CD8-positive, alpha-beta T cell (primary cell): ENCODE measurements at regions of chr10 and their contacts with region 1.

Region 1: DNA sequence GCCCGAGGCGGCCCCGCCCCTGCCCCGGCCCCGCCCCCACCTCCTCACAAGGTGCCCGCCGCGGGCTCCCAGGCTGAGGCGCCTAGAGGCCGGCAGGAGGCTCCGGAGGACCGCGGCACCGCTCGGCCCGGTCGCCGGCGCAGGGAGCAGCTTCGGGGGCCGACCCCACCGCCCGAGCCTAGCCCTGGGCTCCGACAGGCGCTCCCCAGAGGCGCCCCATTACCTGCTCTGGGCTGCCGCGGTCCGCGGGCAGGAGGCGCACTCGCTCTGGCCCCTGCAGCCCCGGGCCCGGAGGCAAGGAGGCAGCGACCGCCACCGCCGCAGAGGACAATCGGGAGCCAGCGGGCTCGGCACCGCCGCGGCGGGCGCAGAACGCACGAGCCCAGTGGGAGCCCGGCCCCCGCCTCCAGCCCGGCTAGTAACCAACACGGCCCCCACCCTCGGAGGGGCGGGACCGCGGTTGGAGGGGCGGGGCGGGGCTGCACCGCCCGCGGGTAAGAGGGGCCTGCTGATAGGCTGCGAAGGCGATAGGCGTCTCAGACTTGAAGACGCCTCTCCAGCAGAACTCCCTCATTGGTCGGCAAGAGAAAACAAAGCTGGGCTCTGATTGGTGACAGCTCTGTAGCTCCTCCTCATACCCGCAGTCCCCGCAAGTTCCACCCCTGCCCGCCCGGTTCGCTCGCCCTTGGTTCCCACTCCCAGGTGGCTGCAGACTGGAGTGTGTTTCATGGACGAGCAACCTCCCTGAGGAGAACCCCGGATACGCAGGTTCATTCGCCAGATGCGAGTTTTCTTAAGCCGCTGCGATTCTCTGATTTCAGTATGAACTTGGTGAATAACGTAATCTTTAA is at the start of gene MPP7:
- DNase-seq: peak; percentile 94 to 98 (median 96)
- ATAC-seq: peak; percentile 89
- H3K4me3 ChIP-seq: peak within 1 kb of the TSS; percentile 67 to 87
- H3K4me3 Mint-ChIP-seq: peak within 1 kb of the TSS; percentile 97
- H3K27ac ChIP-seq: peak within 1 kb of the TSS; percentile 52 to 71
- H3K27ac Mint-ChIP-seq: peak within 1 kb of the TSS; percentile 95
- H3K4me1 ChIP-seq: peaks cover 44% of the 10 kb centered on the region
- H3K4me1 Mint-ChIP-seq: peaks cover 65% of the 10 kb centered on the region
- H3K27me3 ChIP-seq: no peaks in the 10 kb centered on the region
- H3K27me3 Mint-ChIP-seq: no peaks in the 10 kb centered on the region
- CTCF ChIP-seq: peak; percentile 61
- total RNA-seq, gene MPP7: 22.5 to 23.1 TPM

Region 2: GRCh38 chr10:27504007-27504807 is 798.7 kb before region 1 on chr10 and contains the start of gene RAB18:
- CTCF ChIA-PET with region 1: no interaction called
- POLR2A ChIA-PET with region 1: interaction called, 3 read pairs
- intact Hi-C with region 1: loop called in 1 of 2 experiments (anchors 10 kb)
- DNase-seq: peak; percentile 94 to 99 (median 98)
- ATAC-seq: peak; percentile 95
- H3K4me3 ChIP-seq: peak within 1 kb of the TSS; percentile 73 to 82
- H3K4me3 Mint-ChIP-seq: peak within 1 kb of the TSS; percentile 99
- H3K27ac ChIP-seq: peak within 1 kb of the TSS; percentile 81 to 90
- H3K27ac Mint-ChIP-seq: peak within 1 kb of the TSS; percentile 98
- H3K4me1 ChIP-seq: peaks cover 33% of the 10 kb centered on the region
- H3K4me1 Mint-ChIP-seq: peaks cover 52% of the 10 kb centered on the region
- H3K27me3 ChIP-seq: no peaks in the 10 kb centered on the region
- H3K27me3 Mint-ChIP-seq: no peaks in the 10 kb centered on the region
- CTCF ChIP-seq: no peak
- total RNA-seq, gene RAB18: 130 to 146 TPM

Region 3: GRCh38 chr10:27794157-27794556 is 508.7 kb before region 1 on chr10:
- CTCF ChIA-PET with region 1: no interaction called
- POLR2A ChIA-PET with region 1: no interaction called
- intact Hi-C with region 1: no loop called
- DNase-seq: peak in 1 of 9 experiments; percentile 5
- ATAC-seq: no peak
- H3K4me3 ChIP-seq: no peak overlapping the region
- H3K4me3 Mint-ChIP-seq: no peak overlapping the region
- H3K27ac ChIP-seq: no peak overlapping the region
- H3K27ac Mint-ChIP-seq: no peak overlapping the region
- H3K4me1 ChIP-seq: no peaks in the 10 kb centered on the region
- H3K4me1 Mint-ChIP-seq: no peaks in the 10 kb centered on the region
- H3K27me3 ChIP-seq: no peaks in the 10 kb centered on the region
- H3K27me3 Mint-ChIP-seq: peaks cover 13% of the 10 kb centered on the region
- CTCF ChIP-seq: no peak

Region 4: DNA sequence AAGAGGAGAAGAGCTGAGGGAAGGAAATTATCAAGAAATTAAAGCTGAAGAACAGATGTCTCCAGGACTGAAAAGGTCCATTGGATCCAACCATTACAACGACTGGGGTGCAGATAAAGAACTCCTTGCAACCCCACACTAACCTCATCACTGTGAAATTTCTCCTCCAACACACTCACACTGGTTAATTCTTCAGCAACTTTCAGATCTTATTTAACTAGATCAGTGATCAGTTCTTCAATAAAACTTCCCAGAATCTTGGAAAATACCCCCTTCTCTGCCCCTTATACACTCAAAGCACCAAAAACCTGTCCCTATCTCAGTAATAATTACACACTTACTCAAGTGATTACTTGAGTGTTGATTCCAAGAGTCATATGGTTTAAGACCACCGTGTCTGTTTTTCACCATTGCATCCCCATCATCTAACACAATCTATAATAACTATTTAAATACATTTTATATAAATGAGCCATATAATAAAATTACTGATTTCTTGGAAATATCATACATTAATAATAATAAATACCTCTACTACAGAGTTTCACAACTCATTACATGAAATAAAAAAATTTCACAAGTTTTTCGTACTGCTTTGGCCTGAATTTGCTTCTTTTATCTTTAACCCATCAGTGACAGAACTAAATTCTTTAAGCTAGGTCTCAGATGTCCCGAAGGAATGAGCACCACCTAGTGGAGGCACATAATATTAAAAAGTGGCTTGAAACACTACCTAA is 123.7 kb before region 1 on chr10:
- CTCF ChIA-PET with region 1: no interaction called
- POLR2A ChIA-PET with region 1: no interaction called
- intact Hi-C with region 1: loop called in 1 of 2 experiments (anchors 2 kb)
- DNase-seq: peak in 3 of 9 experiments; percentile 32 to 77 (median 68)
- ATAC-seq: peak; percentile 54
- H3K4me3 ChIP-seq: peak overlapping the region; percentile 22 to 45
- H3K4me3 Mint-ChIP-seq: peak overlapping the region; percentile 91
- H3K27ac ChIP-seq: peak overlapping the region in 1 of 2 experiments; percentile 69
- H3K27ac Mint-ChIP-seq: peak overlapping the region; percentile 95
- H3K4me1 ChIP-seq: peaks cover 16% of the 10 kb centered on the region
- H3K4me1 Mint-ChIP-seq: peaks cover 44% of the 10 kb centered on the region
- H3K27me3 ChIP-seq: no peaks in the 10 kb centered on the region
- H3K27me3 Mint-ChIP-seq: no peaks in the 10 kb centered on the region
- CTCF ChIP-seq: peak; percentile 93

Region 5: DNA sequence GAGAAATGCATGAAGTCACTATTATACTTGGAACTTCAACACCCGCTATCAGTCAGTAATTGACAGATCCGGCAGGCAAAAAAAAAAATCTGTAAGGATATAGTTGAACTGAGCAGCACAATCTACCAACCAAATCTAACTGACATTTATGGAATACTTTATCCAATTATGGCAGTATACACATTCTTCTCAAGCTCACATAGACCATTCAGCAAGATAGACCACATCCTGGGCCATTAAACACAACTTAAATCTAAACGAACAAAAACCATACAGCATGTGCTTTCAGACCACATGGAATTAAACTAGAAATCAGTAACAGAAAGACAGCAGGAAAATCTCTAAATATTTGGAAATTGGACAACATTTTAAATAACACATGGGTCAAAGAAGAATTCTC is 112.7 kb before region 1 on chr10:
- CTCF ChIA-PET with region 1: no interaction called
- POLR2A ChIA-PET with region 1: no interaction called
- intact Hi-C with region 1: no loop called
- DNase-seq: no peak
- ATAC-seq: no peak
- H3K4me3 ChIP-seq: no peak overlapping the region
- H3K4me3 Mint-ChIP-seq: no peak overlapping the region
- H3K27ac ChIP-seq: no peak overlapping the region
- H3K27ac Mint-ChIP-seq: no peak overlapping the region
- H3K4me1 ChIP-seq: no peaks in the 10 kb centered on the region
- H3K4me1 Mint-ChIP-seq: peaks cover 37% of the 10 kb centered on the region
- H3K27me3 ChIP-seq: no peaks in the 10 kb centered on the region
- H3K27me3 Mint-ChIP-seq: no peaks in the 10 kb centered on the region
- CTCF ChIP-seq: no peak

Region 6: GRCh38 chr10:28250782-28251181 is 52.1 kb before region 1 on chr10:
- CTCF ChIA-PET with region 1: interaction called, 8 read pairs
- POLR2A ChIA-PET with region 1: interaction called, 5 read pairs
- intact Hi-C with region 1: loop called (anchors 2 to 5 kb)
- DNase-seq: peak in 2 of 9 experiments; percentile 33 to 50
- ATAC-seq: peak; percentile 42
- H3K4me3 ChIP-seq: no peak overlapping the region
- H3K4me3 Mint-ChIP-seq: no peak overlapping the region
- H3K27ac ChIP-seq: no peak overlapping the region
- H3K27ac Mint-ChIP-seq: no peak overlapping the region
- H3K4me1 ChIP-seq: no peaks in the 10 kb centered on the region
- H3K4me1 Mint-ChIP-seq: peaks cover 41% of the 10 kb centered on the region
- H3K27me3 ChIP-seq: no peaks in the 10 kb centered on the region
- H3K27me3 Mint-ChIP-seq: no peaks in the 10 kb centered on the region
- CTCF ChIP-seq: peak; percentile 60

Region 7: DNA sequence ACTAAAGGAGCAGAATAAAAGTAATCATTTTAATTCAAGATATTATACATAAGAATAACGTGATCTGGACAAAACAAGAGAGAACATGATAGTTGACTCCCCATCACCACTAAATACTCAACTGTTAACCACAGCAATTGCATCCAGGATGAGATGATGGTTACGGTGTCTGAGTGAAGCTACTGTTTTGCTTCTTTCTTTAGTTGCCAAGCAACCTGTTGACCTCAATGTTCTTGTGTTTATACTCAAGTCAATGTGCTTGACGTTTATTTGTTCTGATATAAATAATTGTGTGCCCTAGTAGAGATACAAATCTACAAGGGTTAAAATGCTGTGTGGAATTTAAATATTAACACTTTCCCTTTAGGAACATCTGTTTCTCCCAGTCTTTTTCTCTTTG is 31.4 kb after region 1 on chr10:
- CTCF ChIA-PET with region 1: interaction called, 36 read pairs
- POLR2A ChIA-PET with region 1: interaction called, 39 read pairs
- intact Hi-C with region 1: loop called (anchors 1 kb)
- DNase-seq: peak in 8 of 9 experiments; percentile 14 to 98 (median 50)
- ATAC-seq: peak; percentile 61
- H3K4me3 ChIP-seq: peak overlapping the region; percentile 60 to 67
- H3K4me3 Mint-ChIP-seq: peak overlapping the region; percentile 95
- H3K27ac ChIP-seq: peak overlapping the region; percentile 96 to 98
- H3K27ac Mint-ChIP-seq: peak overlapping the region; percentile 100
- H3K4me1 ChIP-seq: peaks cover 64% of the 10 kb centered on the region
- H3K4me1 Mint-ChIP-seq: peaks cover 74% of the 10 kb centered on the region
- H3K27me3 ChIP-seq: no peaks in the 10 kb centered on the region
- H3K27me3 Mint-ChIP-seq: no peaks in the 10 kb centered on the region
- CTCF ChIP-seq: no peak

Region 8: DNA sequence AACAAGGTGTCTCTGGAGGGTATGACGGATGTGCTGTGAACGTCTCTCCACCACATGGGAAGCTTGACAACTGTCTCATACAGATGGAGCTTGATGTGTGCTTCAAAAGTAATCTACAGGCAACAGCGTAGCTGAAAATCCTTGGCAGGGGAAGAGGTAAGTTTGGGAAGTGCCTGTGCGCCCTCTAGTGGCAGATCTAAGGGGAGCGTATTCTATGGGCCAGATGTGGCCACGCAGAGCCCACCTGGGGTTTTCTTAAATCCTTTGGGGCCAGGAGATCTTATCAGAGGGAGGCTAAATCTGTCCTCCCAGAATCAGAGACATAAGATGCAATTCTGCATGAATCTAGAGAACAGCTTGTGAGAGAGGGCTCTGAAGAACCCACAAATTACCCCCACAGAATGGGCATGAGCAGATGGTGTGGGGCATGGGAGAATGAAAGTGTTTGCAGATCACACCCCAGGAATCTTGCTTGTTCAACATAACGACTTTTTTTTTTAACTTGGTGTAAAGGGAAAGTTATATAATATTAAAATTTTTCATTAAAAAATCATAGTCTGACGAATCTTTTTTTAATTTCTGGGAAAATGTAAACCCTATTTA is 91.2 kb after region 1 on chr10:
- CTCF ChIA-PET with region 1: interaction called, 16 read pairs
- POLR2A ChIA-PET with region 1: interaction called, 4 read pairs
- intact Hi-C with region 1: no loop called
- DNase-seq: peak; percentile 26 to 79 (median 63)
- ATAC-seq: peak; percentile 74
- H3K4me3 ChIP-seq: no peak overlapping the region
- H3K4me3 Mint-ChIP-seq: no peak overlapping the region
- H3K27ac ChIP-seq: no peak overlapping the region
- H3K27ac Mint-ChIP-seq: no peak overlapping the region
- H3K4me1 ChIP-seq: no peaks in the 10 kb centered on the region
- H3K4me1 Mint-ChIP-seq: peaks cover 4% of the 10 kb centered on the region
- H3K27me3 ChIP-seq: no peaks in the 10 kb centered on the region
- H3K27me3 Mint-ChIP-seq: peaks cover 15% of the 10 kb centered on the region
- CTCF ChIP-seq: peak; percentile 99

Region 9: DNA sequence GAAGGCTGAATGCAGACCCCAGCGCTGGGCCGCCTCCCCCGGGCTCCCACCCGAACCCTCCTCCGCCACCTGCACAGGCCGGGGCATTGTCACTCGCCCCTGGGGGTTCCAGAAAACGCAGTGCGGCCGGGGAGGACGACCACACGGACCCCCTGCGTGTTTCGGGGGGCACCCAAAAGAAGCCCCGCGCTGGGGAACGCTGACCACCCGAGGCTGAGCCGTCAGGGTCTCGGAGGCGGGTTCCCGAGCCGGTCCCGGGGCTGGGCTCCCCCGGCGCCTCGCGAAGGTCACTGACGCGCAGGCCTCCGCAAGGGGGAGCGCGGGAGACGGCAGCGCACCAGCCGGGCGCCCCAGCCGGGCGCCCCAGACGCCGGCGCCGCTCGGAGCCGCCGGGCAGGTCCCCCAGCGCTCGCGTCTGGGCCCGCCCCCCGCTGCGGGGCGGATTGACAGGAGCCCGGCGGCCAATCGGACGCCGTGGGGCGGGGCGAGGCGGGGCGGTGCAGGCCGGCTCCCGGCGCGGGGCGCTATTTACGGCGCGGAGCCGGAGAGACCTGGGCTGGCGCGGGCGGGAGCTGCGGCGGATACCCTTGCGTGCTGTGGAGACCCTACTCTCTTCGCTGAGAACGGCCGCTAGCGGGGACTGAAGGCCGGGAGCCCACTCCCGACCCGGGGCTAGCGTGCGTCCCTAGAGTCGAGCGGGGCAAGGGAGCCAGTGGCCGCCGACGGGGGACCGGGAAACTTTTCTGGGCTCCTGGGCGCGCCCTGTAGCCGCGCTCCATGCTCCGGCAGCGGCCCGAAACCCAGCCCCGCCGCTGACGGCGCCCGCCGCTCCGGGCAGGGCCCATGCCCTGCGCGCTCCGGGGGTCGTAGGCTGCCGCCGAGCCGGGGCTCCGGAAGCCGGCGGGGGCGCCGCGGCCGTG is 374.4 kb after region 1 on chr10 and contains the start of gene BAMBI:
- CTCF ChIA-PET with region 1: no interaction called
- POLR2A ChIA-PET with region 1: no interaction called
- intact Hi-C with region 1: loop called (anchors 1 to 10 kb)
- DNase-seq: peak; percentile 76 to 95 (median 88)
- ATAC-seq: peak; percentile 96
- H3K4me3 ChIP-seq: peak within 1 kb of the TSS; percentile 53 to 59
- H3K4me3 Mint-ChIP-seq: peak within 1 kb of the TSS; percentile 86
- H3K27ac ChIP-seq: no peak within 1 kb of the TSS
- H3K27ac Mint-ChIP-seq: no peak within 1 kb of the TSS
- H3K4me1 ChIP-seq: peaks cover 34% of the 10 kb centered on the region
- H3K4me1 Mint-ChIP-seq: peaks cover 31% of the 10 kb centered on the region
- H3K27me3 ChIP-seq: peaks cover 19 to 20% of the 10 kb centered on the region in 2 experiments
- H3K27me3 Mint-ChIP-seq: peaks cover 68% of the 10 kb centered on the region
- CTCF ChIP-seq: peak; percentile 40
- total RNA-seq, gene BAMBI: 3.5 to 3.6 TPM

Region 10: DNA sequence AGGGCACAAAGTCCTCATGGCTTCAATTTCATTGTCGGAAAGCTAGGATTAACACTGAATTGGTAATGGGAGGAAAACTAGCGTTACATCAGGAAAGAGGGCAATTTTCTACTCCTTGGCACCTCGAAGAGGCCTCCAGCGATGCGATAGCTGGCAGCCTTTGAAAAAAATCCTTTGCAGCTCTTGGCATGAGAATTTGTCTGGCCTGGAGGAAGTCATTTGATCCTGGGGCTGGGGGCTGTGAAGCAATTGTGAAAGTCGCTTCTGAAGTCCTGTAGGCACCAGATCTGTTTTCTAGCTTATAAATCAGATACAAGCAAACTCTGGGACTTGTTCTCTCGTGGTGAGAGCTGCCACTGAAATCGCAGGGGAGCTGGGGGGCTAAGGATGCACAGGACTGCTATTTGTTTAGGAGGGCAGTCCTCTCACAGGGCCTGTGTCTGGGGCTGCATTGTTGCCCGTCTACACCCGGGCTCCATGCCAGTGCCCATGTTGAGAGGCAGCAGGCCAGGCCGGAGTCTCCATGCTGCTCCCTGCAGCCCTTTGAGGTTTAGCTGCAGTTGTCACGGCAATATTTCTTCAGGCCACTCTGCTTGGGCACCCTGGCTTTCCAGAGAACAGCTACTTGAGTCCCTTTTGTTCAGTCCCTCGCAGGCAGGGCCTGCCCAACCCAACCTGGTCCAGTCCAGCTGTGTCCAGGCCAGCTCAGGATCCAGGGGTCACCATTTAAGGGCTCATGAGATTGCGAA is 779.3 kb after region 1 on chr10:
- CTCF ChIA-PET with region 1: no interaction called
- POLR2A ChIA-PET with region 1: no interaction called
- intact Hi-C with region 1: no loop called
- DNase-seq: no peak
- ATAC-seq: no peak
- H3K4me3 ChIP-seq: no peak overlapping the region
- H3K4me3 Mint-ChIP-seq: no peak overlapping the region
- H3K27ac ChIP-seq: no peak overlapping the region
- H3K27ac Mint-ChIP-seq: no peak overlapping the region
- H3K4me1 ChIP-seq: no peaks in the 10 kb centered on the region
- H3K4me1 Mint-ChIP-seq: no peaks in the 10 kb centered on the region
- H3K27me3 ChIP-seq: no peaks in the 10 kb centered on the region
- H3K27me3 Mint-ChIP-seq: peaks cover 2% of the 10 kb centered on the region
- CTCF ChIP-seq: no peak